ENCODE measurements at regions of chr5 and their contacts with region 1.

Region 1: GRCh38 chr5:103188436-103188835 is 68.3 kb downstream of the PPIP5K2 start:
- DNase-seq: no peak
- ATAC-seq: no peak

Region 2: GRCh38 chr5:103010168-103010567 is 178.3 kb before region 1 on chr5:
- intact Hi-C with region 1: loop called (anchors 10 kb)
- DNase-seq: no peak
- ATAC-seq: no peak